Common myeloid progenitor, CD34-positive (primary cell): ENCODE measurements at regions of chr15 and their contacts with region 1.

Region 1: GRCh38 chr15:77097248-77097721 is 26.4 kb upstream of the TSPAN3 start:
- DNase-seq: peak in 2 of 3 donors; percentile 22 to 44
- H3K4me3 ChIP-seq: no peak overlapping the region
- H3K27ac ChIP-seq: no peak overlapping the region
- H3K4me1 ChIP-seq: peaks cover 0 to 7% (median 4%) of the 10 kb centered on the region in 4 experiments
- H3K27me3 ChIP-seq: no peaks in the 10 kb centered on the region

Region 2: GRCh38 chr15:77107531-77108355 is 10.5 kb after region 1 on chr15:
- CTCF ChIA-PET with region 1: interaction called, 15 read pairs
- POLR2A ChIA-PET with region 1: no interaction called
- DNase-seq: peak; percentile 20 to 52 (median 32)
- H3K4me3 ChIP-seq: no peak overlapping the region
- H3K27ac ChIP-seq: no peak overlapping the region
- H3K4me1 ChIP-seq: no peaks in the 10 kb centered on the region
- H3K27me3 ChIP-seq: no peaks in the 10 kb centered on the region

Region 3: DNA sequence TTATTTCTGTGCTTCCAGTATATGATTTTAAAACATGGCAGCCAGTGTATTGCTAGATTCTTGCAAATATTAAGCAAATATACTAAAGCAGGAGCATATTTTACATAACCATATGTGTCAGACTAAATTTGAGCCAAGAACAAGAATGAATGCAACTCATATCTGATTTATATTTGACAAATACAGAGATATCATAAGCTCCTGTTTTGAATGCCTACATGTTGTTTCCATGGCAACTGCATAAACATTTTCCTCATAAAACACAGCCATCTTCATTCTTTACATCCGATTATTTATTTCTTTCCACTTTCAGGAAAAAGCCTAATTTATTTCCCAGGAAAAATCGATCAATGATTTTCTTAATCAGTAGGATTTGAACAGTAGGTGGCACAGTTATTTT is 145.8 kb after region 1 on chr15:
- CTCF ChIA-PET with region 1: no interaction called
- POLR2A ChIA-PET with region 1: no interaction called
- DNase-seq: no peak
- H3K4me3 ChIP-seq: no peak overlapping the region
- H3K27ac ChIP-seq: no peak overlapping the region
- H3K4me1 ChIP-seq: no peaks in the 10 kb centered on the region
- H3K27me3 ChIP-seq: no peaks in the 10 kb centered on the region